Left ventricle myocardium superior (tissue), 1 donor: ENCODE measurements at regions of chr1 and their contacts with region 1.

Region 1: GRCh38 chr1:111789666-111790316 is 34.1 kb downstream of the DDX20 start:
- DNase-seq: no peak
- ATAC-seq: peak; percentile 73

Region 2: DNA sequence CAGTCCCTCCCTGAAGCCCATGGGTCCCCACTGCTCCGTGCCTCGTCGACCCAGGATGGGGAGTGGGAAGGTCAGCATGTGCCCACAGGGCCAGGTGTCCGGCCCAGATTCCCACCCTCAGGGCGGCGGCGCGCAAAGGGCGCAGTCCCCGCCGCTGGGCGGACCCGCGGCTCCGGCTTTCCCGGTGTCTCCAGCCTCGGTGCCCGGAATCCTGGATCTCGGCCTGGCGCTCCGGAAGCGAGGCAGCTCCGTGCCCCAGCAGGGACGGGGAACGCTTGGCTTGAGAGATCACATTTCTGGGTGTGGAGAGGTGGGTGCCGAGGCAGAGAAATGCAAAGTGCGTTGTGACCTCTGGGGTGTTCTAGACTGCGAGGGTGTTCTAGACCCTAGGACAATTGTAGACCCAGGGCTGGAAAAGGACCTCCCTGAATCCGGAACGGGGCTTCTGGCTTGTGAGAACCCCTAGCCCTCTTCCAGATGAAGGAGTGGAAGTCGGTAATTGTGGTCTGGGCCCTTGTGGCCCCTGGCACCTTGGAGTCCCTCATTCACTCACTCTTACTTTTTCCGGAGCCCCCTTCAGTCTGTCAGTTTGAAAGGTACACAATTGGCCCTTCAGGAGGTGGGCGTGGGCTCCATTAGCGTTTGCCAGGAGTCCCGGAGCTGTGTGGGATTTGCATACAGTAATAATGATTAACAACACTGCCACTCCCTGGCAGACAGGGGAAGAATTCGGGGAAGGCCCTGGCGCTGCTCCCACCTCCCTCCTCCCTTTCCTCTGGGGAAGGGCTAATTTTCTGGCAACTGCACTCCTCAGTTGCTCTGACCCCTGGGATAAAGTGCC is 201.3 kb after region 1 on chr1:
- intact Hi-C with region 1: loop called (anchors 10 kb)
- DNase-seq: peak; percentile 85
- ATAC-seq: peak; percentile 73

Region 3: GRCh38 chr1:112344754-112345423 is 555.1 kb after region 1 on chr1:
- intact Hi-C with region 1: loop called (anchors 10 kb)
- DNase-seq: no peak
- ATAC-seq: no peak